Heart right ventricle (tissue), 16 donors: ENCODE measurements at regions of chr10 and their contacts with region 1.

Region 1: DNA sequence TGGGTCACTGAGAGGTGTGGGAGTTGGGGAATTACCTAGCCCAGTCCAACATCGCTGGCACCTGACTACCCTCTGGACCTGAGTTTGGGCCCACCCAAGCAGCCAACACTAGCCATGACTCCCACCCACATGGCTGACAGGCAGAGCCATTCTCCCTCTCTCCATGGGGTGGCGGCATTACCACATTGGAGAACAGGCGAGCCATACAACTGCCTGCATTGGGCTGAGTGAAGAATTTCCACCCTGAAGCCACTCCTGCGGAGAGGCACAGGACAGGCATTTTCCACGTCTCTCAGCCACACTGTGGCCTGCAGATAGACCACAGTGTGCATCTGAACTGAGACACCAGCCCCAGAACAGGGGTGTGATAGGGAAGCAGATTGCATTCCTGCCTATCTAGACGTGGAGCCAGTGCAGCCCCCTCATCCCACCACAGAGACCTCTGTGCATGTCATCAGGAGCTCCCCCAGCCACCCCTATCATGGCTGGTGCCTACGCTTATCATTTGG is 58.2 kb upstream of the ANTXRL start:
- DNase-seq: peak; percentile 57 to 76
- ATAC-seq: peak; percentile 88 to 97 (median 94)
- H3K4me3 ChIP-seq: no peak overlapping the region
- H3K27ac ChIP-seq: no peak overlapping the region
- H3K4me1 ChIP-seq: peaks cover 0 to 5% (median 0%) of the 10 kb centered on the region in 9 donors
- H3K27me3 ChIP-seq: peaks cover 0 to 18% (median 0%) of the 10 kb centered on the region in 7 donors
- CTCF ChIP-seq: peak; percentile 85 to 95 (median 90)

Region 2: GRCh38 chr10:45627412-45628048 is 601.1 kb before region 1 on chr10:
- intact Hi-C with region 1: no loop called
- DNase-seq: peak in 1 of 2 donors; percentile 55
- ATAC-seq: peak; percentile 84 to 97 (median 94)
- H3K4me3 ChIP-seq: no peak overlapping the region
- H3K27ac ChIP-seq: peak overlapping the region in 9 of 10 donors; percentile 51 to 85 (median 71)
- H3K4me1 ChIP-seq: peaks cover 3 to 36% (median 11%) of the 10 kb centered on the region in 9 donors
- H3K27me3 ChIP-seq: no peaks in the 10 kb centered on the region
- CTCF ChIP-seq: no peak

Region 3: GRCh38 chr10:46266306-46266985 is 37.8 kb after region 1 on chr10:
- intact Hi-C with region 1: no loop called
- DNase-seq: no peak
- ATAC-seq: no peak
- H3K4me3 ChIP-seq: no peak overlapping the region
- H3K27ac ChIP-seq: no peak overlapping the region
- H3K4me1 ChIP-seq: no peaks in the 10 kb centered on the region
- H3K27me3 ChIP-seq: no peaks in the 10 kb centered on the region
- CTCF ChIP-seq: no peak

Region 4: GRCh38 chr10:46325023-46325422 is 96.4 kb after region 1 on chr10:
- intact Hi-C with region 1: loop called in 6 of 10 experiments (anchors 1 to 10 kb)
- DNase-seq: no peak
- ATAC-seq: peak in 1 of 8 donors; percentile 41
- H3K4me3 ChIP-seq: no peak overlapping the region
- H3K27ac ChIP-seq: no peak overlapping the region
- H3K4me1 ChIP-seq: no peaks in the 10 kb centered on the region
- H3K27me3 ChIP-seq: peaks cover 0 to 13% (median 0%) of the 10 kb centered on the region in 7 donors
- CTCF ChIP-seq: peak in 7 of 9 donors; percentile 31 to 60 (median 42)